ENCODE measurements at regions of chr14 and their contacts with region 1.

Region 1: GRCh38 chr14:22570132-22570949 is 18.7 kb downstream of the DAD1 start:
- DNase-seq: no peak
- H3K4me3 ChIP-seq: no peak overlapping the region
- H3K27me3 ChIP-seq: no peaks in the 10 kb centered on the region
- CTCF ChIP-seq: peak; percentile 66

Region 2: GRCh38 chr14:22386924-22387775 is 183.2 kb before region 1 on chr14:
- CTCF ChIA-PET with region 1: interaction called, 14 read pairs
- POLR2A ChIA-PET with region 1: no interaction called
- DNase-seq: no peak
- H3K4me3 ChIP-seq: no peak overlapping the region
- H3K27me3 ChIP-seq: peaks cover 9% of the 10 kb centered on the region
- CTCF ChIP-seq: peak; percentile 74

Region 3: DNA sequence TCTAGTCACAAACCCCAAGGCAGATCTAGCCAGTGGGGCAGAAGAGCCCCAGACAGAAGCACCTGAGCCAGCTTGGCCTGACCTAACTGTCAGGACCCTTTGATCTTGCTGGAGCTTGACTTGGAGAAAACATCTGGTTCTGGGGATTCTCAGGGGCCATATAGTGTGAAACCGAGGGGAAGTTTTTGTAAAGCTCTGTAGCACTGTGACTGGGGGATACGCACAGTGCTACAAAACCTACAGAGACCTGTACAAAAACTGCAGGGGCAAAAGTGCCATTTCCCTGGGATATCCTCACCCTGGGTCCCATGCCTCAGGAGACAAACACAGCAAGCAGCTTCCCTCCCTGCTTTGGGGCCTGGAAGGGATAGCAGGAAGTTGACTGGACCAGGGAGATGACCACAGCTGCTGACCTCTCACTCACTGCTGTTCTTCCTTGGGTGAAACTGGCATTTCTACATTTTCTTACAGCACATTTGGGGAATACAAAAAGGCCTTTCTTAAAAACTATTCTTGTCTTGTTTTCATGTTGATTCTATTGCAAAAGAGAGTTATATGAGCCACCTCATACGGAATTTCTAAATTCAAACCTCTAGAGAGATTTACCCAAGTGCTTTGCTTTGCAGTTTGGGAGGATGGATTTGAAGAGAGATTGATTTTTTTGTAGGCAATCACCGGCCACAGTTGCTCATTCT is 121.3 kb before region 1 on chr14:
- CTCF ChIA-PET with region 1: no interaction called
- POLR2A ChIA-PET with region 1: no interaction called
- DNase-seq: no peak
- H3K4me3 ChIP-seq: no peak overlapping the region
- H3K27me3 ChIP-seq: peaks cover 4% of the 10 kb centered on the region
- CTCF ChIP-seq: no peak

Region 4: GRCh38 chr14:22583994-22584393 is 13.7 kb after region 1 on chr14:
- CTCF ChIA-PET with region 1: interaction called, 15 read pairs
- POLR2A ChIA-PET with region 1: no interaction called
- DNase-seq: no peak
- H3K4me3 ChIP-seq: no peak overlapping the region
- H3K27me3 ChIP-seq: no peaks in the 10 kb centered on the region
- CTCF ChIP-seq: no peak

Region 5: DNA sequence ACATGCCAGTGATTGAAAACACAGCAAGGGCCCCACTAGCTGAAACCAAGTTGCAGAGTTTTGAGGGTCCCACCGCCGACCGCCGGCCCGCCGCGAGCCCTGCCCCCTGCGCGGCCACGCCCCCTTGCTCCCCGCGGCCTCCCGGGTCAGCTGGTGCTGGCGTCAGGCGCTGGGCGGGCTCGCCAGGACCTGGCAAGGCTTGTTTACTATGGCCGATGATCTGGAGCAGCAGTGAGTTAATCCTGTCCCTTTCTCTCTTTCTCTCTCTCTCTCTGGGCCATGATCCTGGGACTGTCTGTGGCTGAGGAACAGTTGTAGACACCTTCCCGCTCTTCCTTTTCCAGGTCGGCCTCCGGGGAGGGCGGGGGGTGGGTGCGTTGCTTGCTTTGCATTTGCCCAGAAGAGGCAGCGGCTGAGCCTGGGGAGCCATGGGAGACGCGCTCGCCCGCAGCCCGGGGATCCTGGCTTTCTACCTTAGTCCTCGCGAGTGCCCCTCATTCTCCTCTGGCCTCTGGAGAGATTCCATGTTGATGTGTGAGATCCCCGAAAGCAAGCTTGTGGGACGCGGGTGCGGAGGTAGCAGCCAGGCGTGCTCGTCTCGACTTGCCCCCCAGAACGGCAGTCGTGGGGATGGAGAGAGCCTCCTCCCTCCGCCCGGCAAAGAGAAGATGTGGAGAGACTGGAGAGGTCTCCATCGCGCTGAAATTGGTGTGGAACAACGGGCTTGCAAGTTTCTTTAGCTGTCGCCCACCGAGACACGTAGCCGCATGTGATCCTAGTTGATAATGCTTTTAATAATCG is 28.0 kb after region 1 on chr14 and contains the start of gene ABHD4:
- CTCF ChIA-PET with region 1: interaction called, 18 read pairs
- POLR2A ChIA-PET with region 1: no interaction called
- DNase-seq: no peak
- H3K4me3 ChIP-seq: peak within 1 kb of the TSS; percentile 95
- H3K27me3 ChIP-seq: peaks cover 2% of the 10 kb centered on the region
- CTCF ChIP-seq: no peak
- polyA plus RNA-seq, gene ABHD4: 77.2 and 115 TPM in 2 replicates

Region 6: GRCh38 chr14:22653012-22653621 is 82.8 kb after region 1 on chr14:
- CTCF ChIA-PET with region 1: interaction called, 115 read pairs
- POLR2A ChIA-PET with region 1: no interaction called
- DNase-seq: peak; percentile 26
- H3K4me3 ChIP-seq: no peak overlapping the region
- H3K27me3 ChIP-seq: no peaks in the 10 kb centered on the region
- CTCF ChIP-seq: peak; percentile 97

Region 7: GRCh38 chr14:22737052-22737451 is 166.7 kb after region 1 on chr14:
- CTCF ChIA-PET with region 1: no interaction called
- POLR2A ChIA-PET with region 1: no interaction called
- DNase-seq: no peak
- H3K4me3 ChIP-seq: no peak overlapping the region
- H3K27me3 ChIP-seq: no peaks in the 10 kb centered on the region
- CTCF ChIP-seq: no peak

Region 8: DNA sequence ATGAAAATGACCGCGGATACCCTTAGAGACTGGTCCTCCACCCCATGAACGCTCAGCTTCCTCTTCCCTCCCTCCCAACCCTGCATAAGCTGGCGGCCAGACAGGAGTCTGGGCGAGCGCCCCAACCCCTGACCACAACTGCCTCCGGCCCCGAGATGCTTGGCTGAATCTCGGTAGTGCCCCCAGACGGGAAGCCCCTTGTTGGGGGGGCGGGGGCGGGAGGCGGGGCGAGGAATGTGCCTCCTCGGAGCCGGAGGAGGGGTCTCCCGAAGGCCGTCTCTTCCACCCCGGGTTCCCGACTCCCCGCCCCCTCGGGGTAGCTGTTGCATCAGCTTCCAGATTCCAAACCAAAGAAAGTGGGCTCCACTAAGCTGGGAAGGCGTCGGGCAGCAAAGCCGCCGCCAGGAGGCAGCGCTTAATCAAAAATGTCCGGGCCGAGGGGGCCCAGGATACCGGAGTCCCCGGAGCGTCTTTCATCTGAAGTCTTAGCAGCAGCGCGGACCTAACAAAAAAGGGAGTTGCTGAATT is 252.3 kb after region 1 on chr14:
- CTCF ChIA-PET with region 1: interaction called, 13 read pairs
- POLR2A ChIA-PET with region 1: interaction called, 19 read pairs
- DNase-seq: peak; percentile 54
- H3K4me3 ChIP-seq: peak overlapping the region; percentile 28
- H3K27me3 ChIP-seq: no peaks in the 10 kb centered on the region
- CTCF ChIP-seq: peak; percentile 90